ENCODE measurements at regions of chr5 and their contacts with region 1.

Region 1: DNA sequence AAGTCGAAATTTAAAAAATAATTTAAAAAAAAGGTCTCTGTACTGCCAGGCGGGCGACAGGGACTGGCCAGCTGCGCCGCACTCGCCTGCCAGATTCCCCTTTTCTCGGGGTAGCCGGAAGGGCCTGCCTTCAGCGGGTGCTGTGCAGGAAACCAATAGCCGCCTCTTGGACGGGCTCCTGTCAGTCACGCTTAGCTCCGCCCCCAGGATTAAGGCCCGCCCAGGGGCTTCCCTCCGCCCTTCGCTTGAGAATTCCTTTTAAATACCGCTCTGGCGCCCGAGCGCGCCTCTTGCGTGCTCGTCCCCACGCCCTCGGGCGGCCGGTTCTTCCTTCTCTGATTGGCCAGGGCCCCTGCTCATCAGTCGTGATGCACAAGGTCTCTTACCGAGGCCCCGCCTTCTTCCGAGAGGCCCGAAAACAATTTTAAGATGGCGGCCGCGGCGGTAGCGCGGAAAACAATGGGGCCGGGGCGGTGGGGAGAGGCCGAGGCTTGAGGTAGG is at the start of gene MAML1:
- DNase-seq: peak; percentile 99 to 100
- H3K4me3 ChIP-seq: peak within 1 kb of the TSS; percentile 92 to 93
- H3K27ac ChIP-seq: peak within 1 kb of the TSS; percentile 88 to 91
- H3K4me1 ChIP-seq: peaks cover 10 to 33% of the 10 kb centered on the region in 2 donors
- H3K27me3 ChIP-seq: no peaks in the 10 kb centered on the region
- CTCF ChIP-seq: no peak
- total RNA-seq, gene MAML1: 42.6 TPM

Region 2: GRCh38 chr5:178232124-178232919 is 1500.1 kb before region 1 on chr5 and contains the start of gene PHYKPL:
- intact Hi-C with region 1: loop called (anchors 5 kb)
- DNase-seq: peak in 1 of 2 donors; percentile 84
- H3K4me3 ChIP-seq: peak within 1 kb of the TSS; percentile 81 to 87
- H3K27ac ChIP-seq: peak within 1 kb of the TSS; percentile 97
- H3K4me1 ChIP-seq: peaks cover 10 to 18% of the 10 kb centered on the region in 2 donors
- H3K27me3 ChIP-seq: no peaks in the 10 kb centered on the region
- CTCF ChIP-seq: peak in 1 of 3 experiments; percentile 10
- total RNA-seq, gene PHYKPL: 89.3 TPM

Region 3: GRCh38 chr5:179623003-179623880 is 109.2 kb before region 1 on chr5 and contains the start of gene HNRNPH1:
- intact Hi-C with region 1: loop called (anchors 2 kb)
- DNase-seq: peak; percentile 93 to 99
- H3K4me3 ChIP-seq: peak within 1 kb of the TSS; percentile 99 to 100
- H3K27ac ChIP-seq: peak within 1 kb of the TSS; percentile 100
- H3K4me1 ChIP-seq: peaks cover 0 to 40% of the 10 kb centered on the region in 2 donors
- H3K27me3 ChIP-seq: no peaks in the 10 kb centered on the region
- CTCF ChIP-seq: peak in 1 of 3 experiments; percentile 5
- total RNA-seq, gene HNRNPH1: 206 TPM

Region 4: DNA sequence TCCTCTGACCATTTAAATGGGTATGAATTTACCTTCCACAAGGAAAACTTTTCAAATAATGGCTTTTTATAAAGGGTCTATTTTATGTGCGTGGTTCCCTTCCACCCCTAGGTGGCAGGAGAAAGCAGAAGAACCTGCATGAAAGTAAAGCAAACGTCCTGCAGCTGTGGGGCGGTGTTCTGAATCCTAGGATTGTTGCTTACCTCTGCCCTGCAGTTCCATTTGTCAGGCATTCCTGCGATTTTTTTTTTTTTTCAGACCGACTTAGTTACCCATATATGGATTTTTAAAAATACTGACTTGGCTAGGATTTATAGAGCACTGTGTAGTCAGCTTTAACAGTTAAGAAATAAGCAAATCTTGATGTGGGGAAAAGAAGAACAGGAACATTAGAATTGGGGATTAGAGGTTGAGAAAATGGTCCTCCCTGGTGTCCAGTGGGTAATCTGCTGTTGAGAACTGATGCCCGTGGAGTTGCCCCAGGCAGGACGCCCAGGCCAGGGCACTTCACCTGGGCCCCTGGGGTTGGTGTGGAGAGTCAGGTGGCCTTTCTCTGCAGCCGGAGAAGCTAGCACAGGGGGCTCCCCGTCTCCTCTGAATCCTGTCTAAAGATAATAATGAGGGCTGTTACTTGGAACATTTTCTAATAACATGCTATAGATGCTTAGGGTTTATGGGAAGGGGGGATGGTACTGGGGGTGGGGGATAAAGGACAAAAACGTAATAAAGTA is 30.9 kb after region 1 on chr5:
- intact Hi-C with region 1: loop called (anchors 1 kb)
- DNase-seq: peak in 1 of 2 donors; percentile 90
- H3K4me3 ChIP-seq: peak overlapping the region in 1 of 2 donors; percentile 16
- H3K27ac ChIP-seq: peak overlapping the region; percentile 74 to 91
- H3K4me1 ChIP-seq: peaks cover 22 to 52% of the 10 kb centered on the region in 2 donors
- H3K27me3 ChIP-seq: no peaks in the 10 kb centered on the region
- CTCF ChIP-seq: peak; percentile 76 to 91 (median 89)

Region 5: DNA sequence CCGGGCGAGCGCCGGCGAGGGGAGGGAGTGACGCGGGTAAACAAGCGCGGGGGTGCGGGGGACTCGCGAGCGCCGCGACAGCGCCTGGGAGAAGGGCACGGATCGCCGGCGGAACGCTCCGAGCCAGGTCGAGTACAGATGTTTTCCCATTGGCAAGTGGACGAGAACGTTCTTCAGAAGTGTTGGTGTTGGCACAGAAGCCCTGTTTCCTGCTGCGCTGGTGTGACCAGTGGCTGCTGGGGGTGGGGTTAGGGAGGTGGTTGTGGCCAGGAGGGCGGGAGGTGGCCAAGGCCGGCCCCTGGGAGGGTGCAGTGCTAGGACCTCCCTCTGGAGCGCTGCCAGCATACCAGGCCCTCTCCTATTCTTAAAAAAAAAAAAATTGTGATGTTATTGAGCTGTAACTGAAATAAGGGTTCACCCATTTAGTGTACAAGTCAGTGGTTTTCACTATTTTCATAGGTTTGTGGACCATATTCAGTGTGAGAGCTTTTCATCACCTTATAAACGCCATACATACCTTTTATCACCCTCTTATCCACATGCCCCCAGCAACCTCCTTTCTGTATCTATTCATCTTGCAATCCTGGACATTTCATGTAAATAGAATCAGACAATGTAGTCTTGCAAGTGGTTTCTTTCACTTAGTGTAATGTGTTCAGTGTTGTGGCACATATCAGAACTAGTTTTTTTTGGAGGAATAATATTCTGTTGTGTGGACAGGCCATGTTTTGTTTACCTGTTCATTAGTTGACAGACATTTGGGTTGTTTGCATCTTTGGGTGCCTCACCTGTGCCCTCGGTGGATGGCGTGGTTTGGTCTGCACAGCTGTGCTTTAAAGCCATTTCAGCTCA is 89.3 kb after region 1 on chr5:
- intact Hi-C with region 1: loop called (anchors 1 kb)
- DNase-seq: peak; percentile 90 to 98
- H3K4me3 ChIP-seq: peak overlapping the region; percentile 84 to 98
- H3K27ac ChIP-seq: peak overlapping the region; percentile 98 to 100
- H3K4me1 ChIP-seq: peaks cover 34 to 47% of the 10 kb centered on the region in 2 donors
- H3K27me3 ChIP-seq: no peaks in the 10 kb centered on the region
- CTCF ChIP-seq: peak in 1 of 3 experiments; percentile 19

Region 6: GRCh38 chr5:179858586-179859427 is 126.3 kb after region 1 on chr5 and contains the start of gene MRNIP:
- intact Hi-C with region 1: no loop called
- DNase-seq: peak; percentile 83 to 98
- H3K4me3 ChIP-seq: peak within 1 kb of the TSS; percentile 79 to 93
- H3K27ac ChIP-seq: peak within 1 kb of the TSS; percentile 78 to 86
- H3K4me1 ChIP-seq: peaks cover 0 to 8% of the 10 kb centered on the region in 2 donors
- H3K27me3 ChIP-seq: no peaks in the 10 kb centered on the region
- CTCF ChIP-seq: peak in 1 of 3 experiments; percentile 33
- total RNA-seq, gene MRNIP: 17.3 TPM

Measured in ascending aorta (tissue), 2 donors.